ENCODE measurements at regions of chr5 and their contacts with region 1.

Region 1: GRCh38 chr5:127718181-127718580 is 15.0 kb downstream of the CCDC192 start:
- DNase-seq: no peak
- H3K4me3 ChIP-seq: no peak overlapping the region
- CTCF ChIP-seq: no peak

Region 2: GRCh38 chr5:127536687-127537086 is 181.5 kb before region 1 on chr5:
- in situ Hi-C with region 1: no loop called
- DNase-seq: no peak
- H3K4me3 ChIP-seq: no peak overlapping the region
- CTCF ChIP-seq: no peak

Region 3: DNA sequence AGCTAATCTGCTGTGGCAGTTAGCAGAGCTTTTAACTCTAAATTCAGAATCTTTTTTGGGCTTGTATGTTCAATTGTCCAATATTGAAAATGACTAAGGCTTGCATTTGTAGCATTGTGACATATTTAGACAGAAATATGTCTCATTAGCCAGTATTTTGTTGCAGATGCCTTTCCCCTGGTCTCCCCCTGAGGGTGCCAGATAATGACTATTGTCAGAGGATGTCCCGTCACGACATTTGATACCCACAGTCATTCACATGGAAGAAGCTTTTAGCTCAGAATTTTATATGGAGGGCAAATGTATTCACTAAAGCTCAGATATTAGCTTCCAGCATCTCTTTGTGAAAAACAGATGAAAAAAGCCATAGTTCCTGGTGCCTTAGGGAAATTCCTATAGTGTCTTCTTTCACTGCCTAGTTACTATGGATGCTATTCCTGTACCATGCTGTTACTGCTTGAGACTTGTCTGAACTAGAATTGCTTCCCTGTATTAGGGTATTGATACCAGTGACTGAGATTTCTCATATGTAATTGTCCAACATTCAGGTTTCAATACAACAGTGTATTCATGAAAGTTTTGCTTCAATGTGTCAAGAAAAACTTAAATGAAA is 81.2 kb after region 1 on chr5:
- in situ Hi-C with region 1: loop called (anchors 5 kb)
- DNase-seq: no peak
- H3K4me3 ChIP-seq: no peak overlapping the region
- CTCF ChIP-seq: no peak

Region 4: GRCh38 chr5:128101676-128102075 is 383.5 kb after region 1 on chr5:
- in situ Hi-C with region 1: no loop called
- DNase-seq: no peak
- H3K4me3 ChIP-seq: no peak overlapping the region
- CTCF ChIP-seq: no peak